ENCODE measurements at regions of chr7 and their contacts with region 1.

Region 1: DNA sequence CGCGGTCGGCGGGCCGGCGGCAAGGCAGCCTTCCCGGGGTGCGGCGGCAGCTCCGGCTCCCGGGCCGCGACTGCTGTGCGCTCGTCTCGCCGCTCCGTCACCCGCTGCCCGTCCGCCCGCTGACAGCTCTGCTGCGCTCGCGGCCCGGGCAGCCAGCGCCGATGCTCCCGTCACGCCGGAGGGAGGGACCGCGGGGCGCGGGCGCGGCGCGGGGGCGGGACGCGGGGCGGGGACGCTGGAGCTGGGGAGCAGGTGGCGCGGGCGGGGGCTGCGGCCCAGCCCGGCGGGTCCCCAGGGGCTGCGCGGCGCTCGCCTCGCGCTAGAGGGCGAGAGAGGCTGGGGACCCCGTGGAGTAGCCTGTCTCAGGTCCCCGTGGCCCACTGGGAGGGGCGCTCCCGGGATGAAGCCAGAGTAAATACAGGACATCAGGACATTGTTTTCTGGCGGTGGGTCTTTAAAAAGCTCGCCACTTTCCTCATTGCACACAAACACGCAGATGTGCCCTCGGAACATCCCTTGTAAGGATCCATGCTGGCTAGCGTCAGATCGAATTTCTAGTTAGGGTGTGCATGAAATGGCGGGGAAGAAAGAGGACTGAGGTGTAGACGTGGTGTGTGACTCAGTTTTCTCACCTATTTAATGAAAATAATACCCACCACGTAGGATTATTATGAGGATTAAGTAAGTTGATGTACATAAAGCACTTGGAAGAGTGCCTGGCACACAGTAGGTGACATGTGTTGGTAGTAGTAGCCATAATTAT is at the start of gene ELAPOR2:
- DNase-seq: peak; percentile 86
- H3K4me3 Mint-ChIP-seq: peak within 1 kb of the TSS; percentile 76
- H3K27ac Mint-ChIP-seq: no peak within 1 kb of the TSS
- H3K4me1 Mint-ChIP-seq: peaks cover 11% of the 10 kb centered on the region
- H3K27me3 Mint-ChIP-seq: peaks cover 7% of the 10 kb centered on the region
- total RNA-seq, gene ELAPOR2: 4.0 to 4.1 TPM

Region 2: DNA sequence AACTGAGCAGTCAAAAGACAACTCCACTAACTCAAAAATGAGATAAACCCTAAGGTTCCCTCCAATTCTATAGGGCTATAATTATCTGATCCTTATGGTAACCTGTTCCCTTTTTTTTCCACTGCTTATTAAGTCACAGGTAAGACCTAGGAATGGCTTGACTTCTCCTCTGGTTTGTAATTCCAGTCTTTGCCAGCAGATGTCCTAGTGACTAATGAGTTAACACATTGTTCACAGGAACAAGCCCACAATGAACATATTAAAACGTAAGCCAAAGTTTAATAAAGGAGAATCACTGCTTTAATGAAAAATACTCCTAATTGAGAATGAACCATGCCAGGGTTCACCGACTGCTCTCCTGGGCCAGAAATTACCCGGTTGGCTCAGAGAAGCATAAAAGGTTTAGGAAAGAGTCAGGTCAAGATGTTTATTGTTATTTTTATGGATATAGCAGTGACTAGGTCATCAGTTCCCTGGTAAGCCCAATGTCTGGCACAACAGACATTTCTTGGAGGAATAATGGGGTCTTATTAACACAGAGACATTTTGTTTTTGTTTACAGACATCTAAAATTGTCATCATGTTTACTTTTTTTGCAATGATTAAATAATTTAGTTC is 120.4 kb before region 1 on chr7:
- CTCF ChIA-PET with region 1: interaction called, 3 read pairs
- POLR2A ChIA-PET with region 1: no interaction called
- intact Hi-C with region 1: loop called (anchors 5 kb)
- DNase-seq: no peak
- H3K4me3 Mint-ChIP-seq: no peak overlapping the region
- H3K27ac Mint-ChIP-seq: no peak overlapping the region
- H3K4me1 Mint-ChIP-seq: no peaks in the 10 kb centered on the region
- H3K27me3 Mint-ChIP-seq: no peaks in the 10 kb centered on the region

Region 3: GRCh38 chr7:87231256-87231655 is 171.6 kb after region 1 on chr7:
- CTCF ChIA-PET with region 1: no interaction called
- POLR2A ChIA-PET with region 1: no interaction called
- intact Hi-C with region 1: loop called (anchors 2 kb)
- DNase-seq: no peak
- H3K4me3 Mint-ChIP-seq: no peak overlapping the region
- H3K27ac Mint-ChIP-seq: no peak overlapping the region
- H3K4me1 Mint-ChIP-seq: peaks cover 8% of the 10 kb centered on the region
- H3K27me3 Mint-ChIP-seq: no peaks in the 10 kb centered on the region

Measured in activated CD4-positive, alpha-beta memory T cell treated with anti-CD3 and anti-CD28 coated beads for 36 hours (primary cell).